Mammary epithelial cell (primary cell): ENCODE measurements at regions of chr4 and their contacts with region 1.

Region 1: DNA sequence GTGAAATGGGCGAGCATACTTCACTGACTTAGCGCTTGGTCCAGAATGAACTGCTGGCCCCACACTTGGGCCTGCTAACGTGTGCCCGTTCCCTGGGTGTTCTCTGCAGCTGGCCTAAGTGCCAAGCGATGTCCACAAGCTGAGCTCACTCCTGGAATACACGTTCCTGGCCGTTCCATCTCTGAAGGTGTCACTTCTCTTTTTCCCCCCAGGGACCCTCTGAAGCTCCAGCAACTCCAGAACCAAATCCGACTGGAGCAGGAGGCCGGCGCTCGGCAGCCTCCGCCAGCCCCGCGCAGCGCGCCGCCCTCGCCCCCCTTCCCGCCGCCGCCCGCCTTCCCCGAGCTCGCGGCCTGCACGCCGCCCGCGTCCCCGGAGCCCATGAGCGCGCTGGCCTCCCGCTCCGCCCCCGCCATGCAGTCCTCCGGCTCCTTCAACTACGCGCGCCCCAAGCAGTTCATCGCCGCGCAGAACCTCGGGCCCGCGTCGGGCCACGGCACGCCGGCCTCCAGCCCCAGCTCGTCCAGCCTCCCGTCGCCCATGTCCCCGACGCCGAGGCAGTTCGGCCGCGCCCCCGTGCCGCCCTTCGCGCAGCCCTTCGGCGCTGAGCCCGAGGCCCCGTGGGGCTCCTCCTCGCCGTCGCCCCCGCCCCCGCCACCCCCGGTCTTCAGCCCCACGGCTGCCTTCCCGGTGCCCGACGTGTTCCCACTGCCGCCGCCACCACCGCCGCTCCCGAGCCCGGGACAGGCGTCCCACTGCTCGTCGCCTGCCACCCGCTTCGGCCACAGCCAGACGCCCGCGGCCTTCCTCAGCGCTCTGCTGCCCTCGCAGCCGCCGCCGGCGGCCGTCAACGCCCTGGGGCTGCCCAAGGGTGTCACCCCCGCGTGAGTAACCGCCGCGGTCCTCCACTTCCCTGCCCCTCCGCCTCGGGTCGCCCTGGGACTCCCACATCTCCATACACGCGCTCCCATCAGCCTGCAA is 132.3 kb downstream of the CBR4 start:
- DNase-seq: peak; percentile 48
- H3K4me3 ChIP-seq: no peak overlapping the region
- H3K27ac ChIP-seq: no peak overlapping the region
- H3K4me1 ChIP-seq: peaks cover 26% of the 10 kb centered on the region
- H3K27me3 ChIP-seq: no peaks in the 10 kb centered on the region
- CTCF ChIP-seq: no peak

Region 2: GRCh38 chr4:168514249-168514852 is 363.4 kb before region 1 on chr4:
- CTCF ChIA-PET with region 1: no interaction called
- dilution Hi-C with region 1: no loop called
- in situ Hi-C with region 1: no loop called
- intact Hi-C with region 1: loop called (anchors 10 kb)
- DNase-seq: peak; percentile 24
- H3K4me3 ChIP-seq: no peak overlapping the region
- H3K27ac ChIP-seq: no peak overlapping the region
- H3K4me1 ChIP-seq: no peaks in the 10 kb centered on the region
- H3K27me3 ChIP-seq: no peaks in the 10 kb centered on the region
- CTCF ChIP-seq: peak; percentile 31 to 36